Panc1 (cell line): ENCODE measurements at regions of chr9 and their contacts with region 1.

Region 1: DNA sequence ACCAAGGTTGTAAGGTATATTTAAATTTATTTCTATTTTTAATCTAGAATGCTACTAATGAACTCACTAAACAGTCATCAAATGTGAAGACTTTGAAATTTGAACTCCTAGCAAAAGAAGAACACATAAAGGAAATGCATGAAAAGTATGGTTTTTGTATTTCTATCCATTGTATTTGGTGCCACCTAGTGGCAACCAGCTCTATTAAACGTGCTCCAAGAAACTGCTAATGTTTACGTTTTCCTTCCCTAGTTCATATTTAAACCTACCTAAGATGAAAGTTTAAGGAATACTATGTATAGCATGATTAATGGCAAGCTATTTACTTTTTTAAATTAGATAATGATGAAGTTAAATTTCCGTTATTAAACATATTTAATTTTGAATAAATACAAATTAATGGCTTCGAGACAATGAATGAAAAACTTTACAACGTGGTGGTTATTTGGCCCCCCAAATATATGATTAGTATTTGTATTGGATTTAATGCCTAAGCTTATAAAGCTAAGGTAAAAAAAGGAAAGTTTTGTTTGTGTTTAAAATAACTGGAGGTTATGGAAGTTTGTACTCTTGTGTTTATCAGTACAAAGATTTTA is 115.9 kb upstream of the SH3GL2 start:
- DNase-seq: peak; percentile 12
- ATAC-seq: no peak
- H3K4me3 ChIP-seq: no peak overlapping the region
- H3K27ac ChIP-seq: no peak overlapping the region
- H3K4me1 ChIP-seq: no peaks in the 10 kb centered on the region
- H3K27me3 ChIP-seq: no peaks in the 10 kb centered on the region
- CTCF ChIP-seq: no peak; the same call in 1 of the 2 replicates

Region 2: DNA sequence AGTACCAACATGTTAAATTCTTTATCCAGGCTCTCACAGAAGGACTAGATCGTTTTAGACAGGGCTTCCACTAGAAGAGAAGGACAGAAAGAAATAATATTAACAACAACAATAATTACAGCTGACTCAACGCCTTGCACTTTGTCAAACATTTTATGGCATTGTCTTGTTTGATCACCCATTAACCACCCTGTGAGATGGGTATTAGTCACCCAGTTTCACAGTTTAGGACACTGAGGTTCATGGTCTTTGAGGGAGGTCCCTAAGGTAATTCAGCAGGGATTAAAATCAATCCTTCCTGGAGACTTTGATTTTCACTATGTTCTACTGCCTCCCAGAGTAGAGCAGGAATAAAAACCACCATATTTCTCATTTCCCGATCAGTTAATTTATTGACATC is 541.1 kb before region 1 on chr9:
- CTCF ChIA-PET with region 1: no interaction called
- POLR2A ChIA-PET with region 1: no interaction called
- in situ Hi-C with region 1: no loop called
- intact Hi-C with region 1: no loop called
- DNase-seq: no peak
- ATAC-seq: no peak
- H3K4me3 ChIP-seq: no peak overlapping the region
- H3K27ac ChIP-seq: no peak overlapping the region
- H3K4me1 ChIP-seq: no peaks in the 10 kb centered on the region
- H3K27me3 ChIP-seq: no peaks in the 10 kb centered on the region
- CTCF ChIP-seq: no peak

Region 3: DNA sequence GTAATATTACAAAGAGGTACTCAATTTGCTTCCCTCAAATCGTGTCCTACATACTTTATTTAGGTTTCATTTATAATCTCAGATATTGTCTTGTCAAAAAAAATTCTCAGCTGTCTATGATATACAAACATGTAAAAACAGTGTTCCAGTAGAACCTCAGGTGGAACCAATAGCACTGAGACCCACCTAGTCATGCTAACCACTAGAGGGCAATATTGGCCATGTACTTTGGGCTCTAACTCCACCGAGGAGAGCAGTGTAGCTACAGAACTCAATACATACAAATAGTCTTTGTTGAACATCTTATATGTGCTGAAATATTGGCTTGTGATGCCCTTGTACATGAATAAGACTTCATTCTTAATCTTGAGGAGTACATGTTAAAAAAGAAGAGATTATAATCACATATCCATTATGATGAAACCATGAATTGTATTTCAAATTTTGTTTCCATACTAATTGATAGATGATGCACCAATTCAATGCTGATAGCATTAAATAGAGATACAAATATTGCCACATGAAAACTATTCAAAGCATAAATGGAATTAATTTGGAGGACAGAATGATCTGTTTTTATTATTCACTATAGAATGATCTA is 399.3 kb before region 1 on chr9:
- CTCF ChIA-PET with region 1: no interaction called
- POLR2A ChIA-PET with region 1: no interaction called
- in situ Hi-C with region 1: no loop called
- intact Hi-C with region 1: loop called (anchors 5 kb)
- DNase-seq: peak; percentile 10
- ATAC-seq: peak; percentile 79; the same call in 1 of the 2 replicates
- H3K4me3 ChIP-seq: no peak overlapping the region
- H3K27ac ChIP-seq: no peak overlapping the region
- H3K4me1 ChIP-seq: no peaks in the 10 kb centered on the region
- H3K27me3 ChIP-seq: no peaks in the 10 kb centered on the region
- CTCF ChIP-seq: peak; percentile 56; the same call in 1 of the 2 replicates

Region 4: GRCh38 chr9:17116400-17116837 is 346.5 kb before region 1 on chr9:
- CTCF ChIA-PET with region 1: no interaction called
- POLR2A ChIA-PET with region 1: no interaction called
- in situ Hi-C with region 1: no loop called
- intact Hi-C with region 1: loop called (anchors 5 kb)
- DNase-seq: no peak
- ATAC-seq: no peak
- H3K4me3 ChIP-seq: no peak overlapping the region
- H3K27ac ChIP-seq: no peak overlapping the region
- H3K4me1 ChIP-seq: no peaks in the 10 kb centered on the region
- H3K27me3 ChIP-seq: no peaks in the 10 kb centered on the region
- CTCF ChIP-seq: peak; percentile 20; the same call in 1 of the 2 replicates

Region 5: DNA sequence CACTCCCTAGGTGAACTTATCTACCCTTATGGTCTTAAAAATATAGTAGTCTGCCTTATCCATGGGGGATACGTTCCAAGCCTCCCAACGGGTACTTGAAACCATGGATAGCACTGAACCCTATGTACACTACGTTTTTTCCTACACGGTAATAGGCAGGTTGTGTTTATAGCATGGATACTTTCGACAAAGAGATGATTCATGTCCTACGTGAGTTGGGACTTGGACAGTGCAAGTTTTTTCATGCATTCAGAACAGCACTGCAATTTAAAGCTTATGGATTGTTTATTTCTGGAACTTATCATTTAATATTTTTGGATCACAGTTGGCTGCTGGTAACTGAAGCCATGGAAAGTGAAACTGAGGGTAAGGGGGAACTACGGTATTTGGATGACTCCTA is 240.0 kb before region 1 on chr9:
- CTCF ChIA-PET with region 1: no interaction called
- POLR2A ChIA-PET with region 1: no interaction called
- in situ Hi-C with region 1: no loop called
- intact Hi-C with region 1: loop called (anchors 5 kb)
- DNase-seq: no peak
- ATAC-seq: no peak
- H3K4me3 ChIP-seq: no peak overlapping the region
- H3K27ac ChIP-seq: no peak overlapping the region
- H3K4me1 ChIP-seq: no peaks in the 10 kb centered on the region
- H3K27me3 ChIP-seq: no peaks in the 10 kb centered on the region
- CTCF ChIP-seq: no peak